Left ventricle myocardium superior (tissue), 1 donor: ENCODE measurements at regions of chr7 and their contacts with region 1.

Region 1: GRCh38 chr7:16695621-16696237 is 49.7 kb downstream of the BZW2 start:
- DNase-seq: no peak
- ATAC-seq: peak; percentile 76

Region 2: GRCh38 chr7:16918288-16918895 is 222.7 kb after region 1 on chr7:
- intact Hi-C with region 1: loop called (anchors 5 kb)
- DNase-seq: no peak
- ATAC-seq: no peak